Vagina (tissue), 2 donors: ENCODE measurements at regions of chr2 and their contacts with region 1.

Region 1: DNA sequence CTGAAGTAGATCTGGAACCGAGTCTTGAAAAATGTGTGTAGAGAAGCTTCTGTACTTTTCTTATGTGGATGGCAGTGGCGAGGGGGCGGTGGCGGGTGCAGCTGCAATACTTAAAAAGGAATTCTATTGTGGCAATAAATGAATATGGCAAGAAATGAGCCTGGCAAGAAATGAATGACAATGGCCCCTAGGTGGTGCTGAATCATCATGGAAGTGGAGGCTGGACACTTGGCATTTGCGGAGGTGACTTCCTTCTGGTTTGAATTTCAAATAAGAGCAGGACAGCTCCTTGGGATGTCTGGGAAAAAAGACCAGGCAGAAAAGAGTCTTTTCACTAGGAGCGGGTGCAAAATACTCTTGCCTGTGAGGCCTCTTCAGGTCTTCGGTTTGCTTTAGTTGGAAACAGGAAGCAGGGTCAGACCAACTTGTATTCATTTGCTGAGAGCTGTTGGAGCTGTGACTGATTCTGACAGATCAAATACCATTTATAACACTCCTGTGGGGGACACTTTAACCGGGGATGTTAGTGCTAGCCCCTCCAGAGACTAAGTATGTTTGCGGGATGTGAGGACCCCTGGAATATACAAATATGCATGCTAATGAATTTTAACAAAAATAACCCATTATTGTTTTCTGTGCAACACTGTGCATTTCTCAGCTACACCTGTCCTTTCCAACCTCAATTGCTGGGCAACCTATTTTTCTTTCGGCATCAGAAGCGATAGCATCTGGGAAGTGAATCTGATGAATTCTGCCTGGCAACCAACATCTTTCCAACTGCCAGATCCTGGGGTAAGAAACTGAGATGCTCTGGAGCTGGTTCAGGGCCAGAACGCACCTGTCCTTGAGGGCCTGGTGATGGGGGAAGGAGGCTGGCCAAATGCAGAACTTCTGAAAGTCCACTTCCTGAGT is 35.4 kb downstream of the FASTKD2 start:
- DNase-seq: no peak
- H3K4me3 ChIP-seq: no peak overlapping the region
- H3K27ac ChIP-seq: no peak overlapping the region
- H3K4me1 ChIP-seq: peaks cover 4% of the 10 kb centered on the region
- H3K27me3 ChIP-seq: no peaks in the 10 kb centered on the region
- CTCF ChIP-seq: peak; percentile 27 to 64 (median 62)
- POLR2A ChIP-seq: no peak

Region 2: GRCh38 chr2:206832873-206833272 is 32.1 kb after region 1 on chr2:
- intact Hi-C with region 1: no loop called
- DNase-seq: no peak
- H3K4me3 ChIP-seq: no peak overlapping the region
- H3K27ac ChIP-seq: no peak overlapping the region
- H3K4me1 ChIP-seq: no peaks in the 10 kb centered on the region
- H3K27me3 ChIP-seq: no peaks in the 10 kb centered on the region
- CTCF ChIP-seq: no peak
- POLR2A ChIP-seq: no peak

Region 3: DNA sequence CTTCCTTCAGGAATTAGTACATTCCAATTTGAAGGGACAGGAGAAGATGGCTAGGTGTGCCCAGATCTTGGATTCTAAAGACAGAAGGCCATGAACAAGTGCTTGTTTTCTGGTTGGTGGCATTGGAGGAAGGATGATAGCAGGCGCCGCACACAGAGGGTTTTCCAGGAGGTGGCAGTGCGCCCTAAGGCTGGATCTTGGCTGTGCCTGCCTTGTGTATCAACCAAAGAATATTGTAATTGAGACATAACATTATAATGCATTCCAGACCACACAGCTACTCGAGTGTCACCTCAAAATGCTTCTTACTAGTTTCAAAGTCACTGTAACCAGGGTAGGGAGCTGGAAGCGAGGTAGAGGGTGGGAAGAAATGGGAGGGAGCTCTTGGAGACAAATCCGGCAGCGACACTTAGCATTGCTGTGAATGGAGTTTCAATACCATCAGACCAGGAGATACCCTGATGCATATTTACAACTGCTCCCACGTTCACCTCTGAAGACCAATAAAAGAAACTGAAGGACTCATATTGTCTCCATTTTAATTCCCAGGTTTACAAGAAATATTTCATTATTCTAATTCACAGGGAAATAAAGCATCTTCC is 181.1 kb after region 1 on chr2:
- intact Hi-C with region 1: loop called (anchors 10 kb)
- DNase-seq: no peak
- H3K4me3 ChIP-seq: no peak overlapping the region
- H3K27ac ChIP-seq: no peak overlapping the region
- H3K4me1 ChIP-seq: peaks cover 4% of the 10 kb centered on the region
- H3K27me3 ChIP-seq: no peaks in the 10 kb centered on the region
- CTCF ChIP-seq: peak; percentile 52 to 71 (median 62)
- POLR2A ChIP-seq: no peak

Region 4: GRCh38 chr2:207473049-207473930 is 672.5 kb after region 1 on chr2:
- intact Hi-C with region 1: loop called (anchors 10 kb)
- DNase-seq: no peak
- H3K4me3 ChIP-seq: no peak overlapping the region
- H3K27ac ChIP-seq: no peak overlapping the region
- H3K4me1 ChIP-seq: peaks cover 8% of the 10 kb centered on the region
- H3K27me3 ChIP-seq: no peaks in the 10 kb centered on the region
- CTCF ChIP-seq: peak in 1 of 3 experiments; percentile 38
- POLR2A ChIP-seq: no peak